PC-9 (cell line): ENCODE measurements at regions of chr13 and their contacts with region 1.

Region 1: GRCh38 chr13:75549262-75550158 is at the start of gene UCHL3:
- DNase-seq: peak; percentile 88 to 96
- H3K4me3 ChIP-seq: peak within 1 kb of the TSS; percentile 87
- H3K27ac ChIP-seq: peak within 1 kb of the TSS; percentile 66
- H3K4me1 ChIP-seq: peaks cover 44% of the 10 kb centered on the region
- H3K27me3 ChIP-seq: no peaks in the 10 kb centered on the region
- CTCF ChIP-seq: peak; percentile 83
- total RNA-seq, gene UCHL3: 39.7 and 54.9 TPM in 2 replicates

Region 2: GRCh38 chr13:75202981-75203380 is 346.5 kb before region 1 on chr13:
- CTCF ChIA-PET with region 1: no interaction called
- POLR2A ChIA-PET with region 1: no interaction called
- intact Hi-C with region 1: no loop called
- DNase-seq: no peak
- H3K4me3 ChIP-seq: no peak overlapping the region
- H3K27ac ChIP-seq: no peak overlapping the region
- H3K4me1 ChIP-seq: no peaks in the 10 kb centered on the region
- H3K27me3 ChIP-seq: peaks cover 4% of the 10 kb centered on the region; the same call in 1 of the 2 replicates
- CTCF ChIP-seq: no peak

Region 3: DNA sequence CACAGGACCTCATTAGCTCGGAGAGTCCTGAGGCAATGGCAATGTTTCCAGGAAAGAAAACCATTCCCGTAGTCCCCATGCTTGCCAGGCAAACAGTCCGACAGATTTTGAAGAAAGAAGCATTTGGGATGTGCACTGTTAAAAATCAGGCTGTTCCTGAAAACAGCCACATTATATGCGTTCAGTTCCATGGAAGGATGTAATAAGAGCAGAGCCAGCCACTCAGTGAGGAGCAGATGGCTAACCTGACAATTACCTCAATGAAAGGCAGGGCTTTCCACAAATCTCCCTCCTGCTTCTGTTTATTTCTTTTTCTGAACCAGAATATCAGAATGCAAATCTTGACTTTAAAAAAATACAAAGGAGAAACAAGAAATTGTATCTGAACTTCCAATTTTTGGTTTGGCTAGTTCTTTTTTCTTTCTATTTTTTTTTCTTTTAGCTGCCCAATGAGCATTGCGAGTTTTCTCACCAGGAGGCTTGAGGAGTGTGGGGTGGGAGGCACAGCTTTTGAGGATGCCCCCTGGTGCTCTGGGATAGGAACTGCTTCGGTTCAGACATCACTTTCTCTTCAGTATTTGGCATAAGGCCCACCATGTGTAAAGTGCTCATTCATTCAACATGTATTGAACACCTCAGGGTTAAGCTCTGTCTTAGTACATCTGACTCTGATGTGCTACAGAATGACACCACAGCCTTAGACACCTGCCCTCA is 191.8 kb before region 1 on chr13:
- CTCF ChIA-PET with region 1: interaction called, 11 read pairs
- POLR2A ChIA-PET with region 1: no interaction called
- intact Hi-C with region 1: no loop called
- DNase-seq: peak in 1 of 2 experiments; percentile 7
- H3K4me3 ChIP-seq: no peak overlapping the region
- H3K27ac ChIP-seq: no peak overlapping the region
- H3K4me1 ChIP-seq: no peaks in the 10 kb centered on the region
- H3K27me3 ChIP-seq: no peaks in the 10 kb centered on the region
- CTCF ChIP-seq: peak; percentile 64

Region 4: GRCh38 chr13:75416327-75417005 is 133.0 kb before region 1 on chr13:
- CTCF ChIA-PET with region 1: interaction called, 14 read pairs
- POLR2A ChIA-PET with region 1: no interaction called
- intact Hi-C with region 1: no loop called
- DNase-seq: no peak
- H3K4me3 ChIP-seq: 0 out of 2 replicates have a peak overlapping the region, but pooled peaks have one; percentile 10
- H3K27ac ChIP-seq: peak overlapping the region; percentile 65; the same call in 1 of the 2 replicates
- H3K4me1 ChIP-seq: peaks cover 50% of the 10 kb centered on the region
- H3K27me3 ChIP-seq: no peaks in the 10 kb centered on the region
- CTCF ChIP-seq: no peak

Region 5: GRCh38 chr13:75458696-75459422 is 90.7 kb before region 1 on chr13:
- CTCF ChIA-PET with region 1: no interaction called
- POLR2A ChIA-PET with region 1: no interaction called
- intact Hi-C with region 1: no loop called
- DNase-seq: no peak
- H3K4me3 ChIP-seq: no peak overlapping the region
- H3K27ac ChIP-seq: no peak overlapping the region
- H3K4me1 ChIP-seq: no peaks in the 10 kb centered on the region; the same call in 1 of the 2 replicates
- H3K27me3 ChIP-seq: no peaks in the 10 kb centered on the region
- CTCF ChIP-seq: no peak